ENCODE measurements at regions of chr12 and their contacts with region 1.

Region 1: GRCh38 chr12:39764944-39765560 is 145.4 kb upstream of the ABCD2 start:
- DNase-seq: no peak

Region 2: DNA sequence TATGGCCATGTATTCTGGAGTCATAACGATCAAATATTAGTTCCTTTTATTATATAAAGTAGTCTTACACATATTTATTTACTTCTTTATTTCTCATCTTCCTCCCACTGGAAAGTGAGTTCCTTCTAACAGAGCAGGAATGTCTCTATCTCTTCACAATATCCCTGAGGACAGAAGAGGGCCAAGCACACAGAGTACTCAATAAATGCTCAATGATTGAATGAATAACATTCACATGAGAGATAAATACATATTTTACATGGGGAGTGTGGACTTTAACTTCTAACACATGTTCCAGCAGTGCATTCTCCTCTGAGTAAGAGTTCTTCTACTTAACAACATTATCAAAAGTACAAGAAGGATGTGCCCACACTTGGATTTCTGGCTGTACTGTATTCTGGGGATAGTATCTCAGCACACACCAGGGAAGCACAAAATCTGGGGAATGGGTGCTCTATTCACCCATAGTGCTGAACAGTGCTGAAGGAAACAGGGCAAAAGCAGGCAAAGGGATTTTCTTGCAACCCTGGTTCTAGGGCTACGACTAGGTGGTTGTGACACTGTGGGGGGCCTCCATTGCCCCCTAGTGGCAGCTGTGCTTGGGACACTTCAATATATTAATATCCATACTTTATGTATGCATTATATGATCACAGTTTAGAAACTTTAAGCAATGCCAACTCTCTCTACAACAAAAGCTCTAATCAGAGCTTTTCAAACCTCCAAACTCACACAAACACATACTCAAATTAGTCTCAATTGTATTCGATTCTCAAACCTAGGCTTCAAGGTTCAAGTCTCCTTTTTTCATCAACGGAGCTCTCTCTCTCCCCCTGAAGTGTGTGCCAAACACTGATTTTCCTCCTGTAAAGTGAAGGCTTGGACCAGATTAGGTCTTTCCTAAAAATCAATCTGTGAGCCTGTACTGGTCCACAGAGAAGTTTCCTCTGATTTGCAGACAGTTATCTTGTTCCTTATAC is 225.4 kb after region 1 on chr12:
- intact Hi-C with region 1: loop called (anchors 2 kb)
- DNase-seq: peak in 9 of 10 donors; percentile 25 to 91 (median 41)

Measured in posterior cingulate gyrus (tissue), 11 donors.